ENCODE measurements at regions of chr22 and their contacts with region 1.

Region 1: GRCh38 chr22:39123751-39124601 is 26.9 kb downstream of the APOBEC3H start:
- DNase-seq: no peak
- H3K4me3 Mint-ChIP-seq: no peak overlapping the region
- H3K27ac Mint-ChIP-seq: no peak overlapping the region
- H3K4me1 Mint-ChIP-seq: no peaks in the 10 kb centered on the region
- H3K27me3 Mint-ChIP-seq: no peaks in the 10 kb centered on the region
- CTCF ChIP-seq: no peak

Region 2: GRCh38 chr22:38831166-38831945 is 292.6 kb before region 1 on chr22:
- CTCF ChIA-PET with region 1: no interaction called
- POLR2A ChIA-PET with region 1: no interaction called
- intact Hi-C with region 1: no loop called
- DNase-seq: peak; percentile 75
- H3K4me3 Mint-ChIP-seq: no peak overlapping the region
- H3K27ac Mint-ChIP-seq: no peak overlapping the region
- H3K4me1 Mint-ChIP-seq: peaks cover 4% of the 10 kb centered on the region
- H3K27me3 Mint-ChIP-seq: no peaks in the 10 kb centered on the region
- CTCF ChIP-seq: no peak

Region 3: GRCh38 chr22:39013942-39014722 is 109.8 kb before region 1 on chr22 and contains the start of gene APOBEC3C:
- CTCF ChIA-PET with region 1: no interaction called
- POLR2A ChIA-PET with region 1: no interaction called
- intact Hi-C with region 1: loop called (anchors 1 kb)
- DNase-seq: peak; percentile 88
- H3K4me3 Mint-ChIP-seq: peak within 1 kb of the TSS; percentile 94
- H3K27ac Mint-ChIP-seq: peak within 1 kb of the TSS; percentile 96
- H3K4me1 Mint-ChIP-seq: peaks cover 5% of the 10 kb centered on the region
- H3K27me3 Mint-ChIP-seq: no peaks in the 10 kb centered on the region
- CTCF ChIP-seq: no peak
- total RNA-seq, gene APOBEC3C: 24.8 and 30.1 TPM in 2 replicates

Region 4: GRCh38 chr22:39220897-39221850 is 97.2 kb after region 1 on chr22:
- CTCF ChIA-PET with region 1: no interaction called
- POLR2A ChIA-PET with region 1: no interaction called
- intact Hi-C with region 1: no loop called
- DNase-seq: peak; percentile 82
- H3K4me3 Mint-ChIP-seq: no peak overlapping the region
- H3K27ac Mint-ChIP-seq: peak overlapping the region; percentile 24
- H3K4me1 Mint-ChIP-seq: peaks cover 16% of the 10 kb centered on the region
- H3K27me3 Mint-ChIP-seq: no peaks in the 10 kb centered on the region
- CTCF ChIP-seq: no peak